ENCODE measurements at regions of chr15 and their contacts with region 1.

Region 1: DNA sequence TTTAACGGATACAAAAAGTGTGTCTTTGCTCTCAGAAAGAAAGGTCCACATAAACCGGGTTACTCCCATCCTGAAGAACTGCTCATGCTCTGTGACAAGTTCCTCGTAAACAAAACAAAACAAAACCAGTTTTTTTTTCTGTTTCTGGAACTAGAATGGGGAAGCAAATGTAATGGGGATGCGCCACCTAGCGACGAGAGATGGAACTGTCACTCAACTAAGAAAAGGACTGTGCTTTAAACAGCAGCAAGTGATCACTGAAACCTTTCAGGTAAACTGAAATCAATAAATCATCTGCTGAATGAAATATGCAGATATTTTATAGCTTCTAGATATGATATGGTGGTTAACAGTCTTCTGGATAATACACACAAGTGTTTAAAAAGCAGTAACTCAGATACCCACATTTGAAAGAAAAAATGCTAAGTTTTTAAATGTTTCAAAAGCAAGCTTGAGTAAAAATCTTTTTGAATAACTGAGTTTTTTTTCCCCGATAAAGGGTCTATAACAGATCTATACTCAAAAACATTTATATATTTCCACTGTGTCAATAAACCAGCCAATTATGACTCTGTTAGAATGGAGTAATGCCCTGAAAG is 10.9 kb downstream of the TM2D3 start:
- DNase-seq: peak; percentile 48 to 77
- H3K4me3 ChIP-seq: no peak overlapping the region
- H3K4me1 ChIP-seq: peaks cover 17% of the 10 kb centered on the region
- H3K27me3 ChIP-seq: no peaks in the 10 kb centered on the region

Region 2: GRCh38 chr15:101294731-101295606 is 346.3 kb before region 1 on chr15 and contains the start of gene SNRPA1:
- in situ Hi-C with region 1: loop called (anchors 5 kb)
- DNase-seq: peak; percentile 93 to 97
- H3K4me3 ChIP-seq: peak within 1 kb of the TSS; percentile 76
- H3K4me1 ChIP-seq: peaks cover 17% of the 10 kb centered on the region
- H3K27me3 ChIP-seq: no peaks in the 10 kb centered on the region

Region 3: GRCh38 chr15:101469520-101470288 is 171.6 kb before region 1 on chr15:
- in situ Hi-C with region 1: no loop called
- DNase-seq: no peak
- H3K4me3 ChIP-seq: no peak overlapping the region
- H3K4me1 ChIP-seq: no peaks in the 10 kb centered on the region
- H3K27me3 ChIP-seq: no peaks in the 10 kb centered on the region

Region 4: GRCh38 chr15:101551696-101552591 is 89.3 kb before region 1 on chr15:
- in situ Hi-C with region 1: no loop called
- DNase-seq: no peak
- H3K4me3 ChIP-seq: no peak overlapping the region
- H3K4me1 ChIP-seq: no peaks in the 10 kb centered on the region
- H3K27me3 ChIP-seq: peaks cover 20% of the 10 kb centered on the region

Measured in HAP-1 (cell line).